GM18951 (cell line): ENCODE measurements at regions of chr4 and their contacts with region 1.

Region 1: GRCh38 chr4:86522349-86522748 is 71.8 kb upstream of the PTPN13 start:
- POLR2A ChIP-seq: no peak

Region 2: DNA sequence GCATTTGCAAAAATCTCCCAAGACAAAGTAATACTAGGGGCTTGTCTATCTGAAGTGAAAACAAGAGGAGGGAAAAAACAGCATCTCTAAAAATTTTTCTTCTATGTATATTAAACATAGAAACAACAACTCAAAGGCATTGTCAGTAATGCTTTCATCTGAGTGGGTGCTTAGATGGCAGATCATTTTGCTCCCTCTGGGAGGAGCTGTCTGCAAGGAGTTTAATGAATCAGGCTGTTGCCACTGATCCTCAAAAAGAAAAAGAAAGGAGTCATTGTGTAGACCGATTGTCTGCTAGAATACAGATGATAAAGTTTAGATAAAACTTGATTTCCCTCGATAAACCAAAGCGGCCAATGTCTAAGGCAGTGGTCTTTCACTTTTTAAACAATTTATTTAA is 747.8 kb after region 1 on chr4:
- in situ Hi-C with region 1: loop called (anchors 25 kb)
- POLR2A ChIP-seq: no peak